OCI-LY7 (cell line): ENCODE measurements at regions of chr2 and their contacts with region 1.

Region 1: GRCh38 chr2:226906163-226906693 is 70.4 kb downstream of the RHBDD1 start:
- DNase-seq: peak; percentile 93
- H3K4me3 ChIP-seq: peak overlapping the region; percentile 70
- H3K27ac ChIP-seq: peak overlapping the region; percentile 98
- H3K4me1 ChIP-seq: peaks cover 95% of the 10 kb centered on the region
- CTCF ChIP-seq: no peak

Region 2: DNA sequence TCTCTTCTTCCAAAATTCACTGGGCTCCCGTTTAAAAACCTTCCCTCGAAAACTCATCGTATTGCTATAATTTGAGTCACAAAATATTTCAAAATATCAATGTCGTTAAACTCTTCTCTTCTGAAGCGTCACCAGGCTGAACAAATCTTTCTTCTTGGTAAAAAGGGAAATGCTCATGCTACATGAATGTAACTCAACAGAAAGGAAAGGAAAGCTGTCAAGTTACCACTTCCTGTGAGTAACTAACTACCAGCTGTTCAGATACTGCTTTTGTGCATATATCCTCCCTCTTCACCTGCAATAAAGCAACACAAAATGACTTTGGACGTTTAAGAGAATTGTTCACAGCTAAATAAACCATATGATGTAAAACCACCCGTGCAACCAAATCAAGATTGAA is 1959.3 kb before region 1 on chr2:
- CTCF ChIA-PET with region 1: no interaction called
- POLR2A ChIA-PET with region 1: no interaction called
- intact Hi-C with region 1: loop called (anchors 10 kb)
- DNase-seq: peak; percentile 86
- H3K4me3 ChIP-seq: peak overlapping the region; percentile 83
- H3K27ac ChIP-seq: peak overlapping the region; percentile 92
- H3K4me1 ChIP-seq: peaks cover 80% of the 10 kb centered on the region
- CTCF ChIP-seq: no peak

Region 3: GRCh38 chr2:226772389-226773179 is 133.6 kb before region 1 on chr2:
- CTCF ChIA-PET with region 1: no interaction called
- POLR2A ChIA-PET with region 1: interaction called, 7 read pairs
- intact Hi-C with region 1: loop called (anchors 5 kb)
- DNase-seq: peak; percentile 95
- H3K4me3 ChIP-seq: peak overlapping the region; percentile 56
- H3K27ac ChIP-seq: peak overlapping the region; percentile 90
- H3K4me1 ChIP-seq: peaks cover 61% of the 10 kb centered on the region
- CTCF ChIP-seq: no peak

Region 4: DNA sequence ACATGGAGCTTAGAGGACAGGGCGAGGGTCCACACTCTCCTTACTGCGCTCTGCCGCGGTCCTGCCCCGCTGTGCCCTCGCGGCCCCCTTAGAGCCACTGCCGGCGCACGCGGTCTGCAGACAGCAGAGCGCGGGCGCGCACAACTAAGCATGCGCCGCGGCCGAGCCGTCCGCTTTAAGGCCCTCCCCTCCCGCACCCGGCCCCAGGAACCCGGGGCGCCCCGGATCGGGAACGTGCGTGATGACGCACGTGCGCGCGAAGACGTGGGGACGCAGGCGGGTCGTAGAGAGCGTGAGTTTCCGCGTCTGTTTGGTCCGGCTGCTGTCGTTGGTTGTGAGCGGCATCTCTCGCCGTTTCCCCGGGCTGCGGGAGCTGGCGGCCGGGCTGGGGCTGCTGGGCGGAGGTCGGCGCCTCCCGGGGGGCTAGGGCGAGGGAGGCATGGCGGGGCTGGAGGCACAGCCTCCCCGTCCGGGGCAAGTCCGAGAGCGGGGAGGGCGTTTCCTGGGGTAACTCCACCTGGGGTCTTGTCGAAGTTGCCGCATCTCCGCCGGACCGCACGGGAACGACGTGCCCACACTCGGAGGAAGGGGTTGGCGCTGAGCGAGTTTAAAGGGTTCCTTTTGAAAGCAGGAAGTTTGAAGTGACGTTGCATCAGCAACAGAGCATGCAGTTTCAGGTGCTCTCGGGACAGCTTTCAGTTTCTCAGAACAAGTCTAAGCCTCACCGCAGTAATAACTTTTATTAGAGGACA is 70.3 kb before region 1 on chr2 and contains the start of gene RHBDD1:
- CTCF ChIA-PET with region 1: interaction called, 3 read pairs
- POLR2A ChIA-PET with region 1: interaction called, 60 read pairs
- intact Hi-C with region 1: loop called (anchors 1 kb)
- DNase-seq: peak; percentile 96
- H3K4me3 ChIP-seq: peak within 1 kb of the TSS; percentile 73
- H3K27ac ChIP-seq: peak within 1 kb of the TSS; percentile 97
- H3K4me1 ChIP-seq: peaks cover 53% of the 10 kb centered on the region
- CTCF ChIP-seq: no peak
- total RNA-seq, gene RHBDD1: 30.4 and 40.8 TPM in 2 replicates

Region 5: GRCh38 chr2:226891780-226892590 is 14.2 kb before region 1 on chr2:
- CTCF ChIA-PET with region 1: no interaction called
- POLR2A ChIA-PET with region 1: interaction called, 25 read pairs
- intact Hi-C with region 1: no loop called
- DNase-seq: peak; percentile 14
- H3K4me3 ChIP-seq: no peak overlapping the region
- H3K27ac ChIP-seq: no peak overlapping the region
- H3K4me1 ChIP-seq: peaks cover 8% of the 10 kb centered on the region
- CTCF ChIP-seq: 0 out of 2 replicates have a peak, but pooled peaks have one; percentile 17

Region 6: GRCh38 chr2:226971084-226971483 is 64.9 kb after region 1 on chr2:
- CTCF ChIA-PET with region 1: no interaction called
- POLR2A ChIA-PET with region 1: interaction called, 7 read pairs
- intact Hi-C with region 1: loop called (anchors 1 kb)
- DNase-seq: peak; percentile 77
- H3K4me3 ChIP-seq: peak overlapping the region; percentile 57
- H3K27ac ChIP-seq: peak overlapping the region; percentile 99
- H3K4me1 ChIP-seq: peaks cover 77% of the 10 kb centered on the region
- CTCF ChIP-seq: no peak

Region 7: DNA sequence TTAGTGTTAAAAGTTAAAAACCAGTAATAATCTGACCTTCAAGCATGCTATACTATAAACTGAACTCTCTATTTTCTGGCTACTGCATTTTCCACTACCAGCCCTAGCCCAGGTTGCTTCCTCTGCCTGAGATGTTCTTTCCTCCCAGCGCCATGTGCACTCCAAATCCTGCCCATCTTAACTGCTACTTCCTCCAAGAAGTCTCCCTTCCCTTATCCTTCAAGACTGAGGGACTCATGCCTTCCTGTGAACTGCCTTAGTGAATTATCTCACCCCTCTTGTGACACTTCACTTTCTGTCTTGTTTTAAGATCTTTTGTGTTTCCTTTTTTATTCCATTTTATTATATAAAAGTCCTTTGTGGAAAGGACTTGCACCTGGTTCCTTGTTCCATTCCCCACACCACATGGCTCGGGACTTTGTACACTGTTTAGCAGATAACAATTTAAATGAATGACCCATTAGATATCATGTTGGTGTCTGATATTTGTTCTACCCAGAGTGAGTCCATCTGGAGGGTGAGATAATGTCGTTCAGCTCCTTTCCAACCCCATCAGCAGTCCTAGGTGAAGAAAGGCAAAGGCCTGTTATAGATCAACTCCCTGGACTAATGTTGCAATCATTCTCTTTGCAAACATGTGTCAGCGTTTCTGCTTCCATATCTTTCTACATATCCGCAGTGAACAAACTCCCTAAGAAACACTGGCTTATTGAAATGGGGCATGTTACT is 544.9 kb after region 1 on chr2:
- CTCF ChIA-PET with region 1: no interaction called
- POLR2A ChIA-PET with region 1: no interaction called
- intact Hi-C with region 1: no loop called
- DNase-seq: no peak
- H3K4me3 ChIP-seq: no peak overlapping the region
- H3K27ac ChIP-seq: no peak overlapping the region
- H3K4me1 ChIP-seq: no peaks in the 10 kb centered on the region
- CTCF ChIP-seq: no peak